ENCODE measurements at regions of chr13 and their contacts with region 1.

Region 1: GRCh38 chr13:68927387-68928026 is 1180.1 kb upstream of the ATXN8OS start:
- DNase-seq: peak; percentile 57
- H3K4me3 ChIP-seq: no peak overlapping the region
- H3K4me3 Mint-ChIP-seq: no peak overlapping the region
- H3K27ac Mint-ChIP-seq: no peak overlapping the region
- H3K4me1 ChIP-seq: no peaks in the 10 kb centered on the region
- H3K4me1 Mint-ChIP-seq: no peaks in the 10 kb centered on the region
- H3K27me3 ChIP-seq: no peaks in the 10 kb centered on the region
- H3K27me3 Mint-ChIP-seq: no peaks in the 10 kb centered on the region
- CTCF ChIP-seq: peak; percentile 78

Region 2: GRCh38 chr13:68810660-68811059 is 116.8 kb before region 1 on chr13:
- CTCF ChIA-PET with region 1: interaction called, 20 read pairs
- POLR2A ChIA-PET with region 1: no interaction called
- intact Hi-C with region 1: loop called (anchors 1 kb)
- DNase-seq: peak in 1 of 2 experiments; percentile 16
- H3K4me3 ChIP-seq: no peak overlapping the region
- H3K4me3 Mint-ChIP-seq: no peak overlapping the region
- H3K27ac Mint-ChIP-seq: no peak overlapping the region
- H3K4me1 ChIP-seq: no peaks in the 10 kb centered on the region
- H3K4me1 Mint-ChIP-seq: no peaks in the 10 kb centered on the region
- H3K27me3 ChIP-seq: no peaks in the 10 kb centered on the region
- H3K27me3 Mint-ChIP-seq: no peaks in the 10 kb centered on the region
- CTCF ChIP-seq: peak; percentile 23 to 61

Region 3: GRCh38 chr13:68816724-68817123 is 110.8 kb before region 1 on chr13:
- CTCF ChIA-PET with region 1: interaction called, 4 read pairs
- POLR2A ChIA-PET with region 1: no interaction called
- intact Hi-C with region 1: loop called (anchors 1 kb)
- DNase-seq: peak in 1 of 2 experiments; percentile 10
- H3K4me3 ChIP-seq: no peak overlapping the region
- H3K4me3 Mint-ChIP-seq: no peak overlapping the region
- H3K27ac Mint-ChIP-seq: no peak overlapping the region
- H3K4me1 ChIP-seq: no peaks in the 10 kb centered on the region
- H3K4me1 Mint-ChIP-seq: no peaks in the 10 kb centered on the region
- H3K27me3 ChIP-seq: no peaks in the 10 kb centered on the region
- H3K27me3 Mint-ChIP-seq: no peaks in the 10 kb centered on the region
- CTCF ChIP-seq: peak in 1 of 2 experiments; percentile 7